K562 (cell line): ENCODE measurements at regions of chr4 and their contacts with region 1.

Region 1: GRCh38 chr4:81471588-81472288 is at the start of gene RASGEF1B:
- DNase-seq: peak; percentile 88 to 98 (median 96)
- ATAC-seq: peak; percentile 99
- H3K4me3 ChIP-seq: peak within 1 kb of the TSS; percentile 64
- H3K27ac ChIP-seq: no peak within 1 kb of the TSS; the same call in 2 of the 3 replicates
- H3K4me1 ChIP-seq: peaks cover 19% of the 10 kb centered on the region in 2 experiments; a peak in 4 of 5 replicates
- H3K27me3 ChIP-seq: peaks cover 17 to 24% of the 10 kb centered on the region in 2 experiments
- CTCF ChIP-seq: no peak
- EP300 ChIP-seq: no peak
- POLR2A ChIP-seq: no peak
- RAD21 ChIP-seq: no peak
- polyA plus RNA-seq, gene RASGEF1B: 0.04 to 0.20 TPM

Region 2: GRCh38 chr4:81272671-81273070 is 199.1 kb before region 1 on chr4:
- CTCF ChIA-PET with region 1: no interaction called
- POLR2A ChIA-PET with region 1: no interaction called
- in situ Hi-C with region 1: no loop called
- intact Hi-C with region 1: no loop called
- DNase-seq: no peak
- ATAC-seq: no peak
- H3K4me3 ChIP-seq: no peak overlapping the region
- H3K27ac ChIP-seq: no peak overlapping the region
- H3K4me1 ChIP-seq: no peaks in the 10 kb centered on the region
- H3K27me3 ChIP-seq: no peaks in the 10 kb centered on the region
- CTCF ChIP-seq: no peak
- EP300 ChIP-seq: no peak
- POLR2A ChIP-seq: no peak
- RAD21 ChIP-seq: no peak

Region 3: DNA sequence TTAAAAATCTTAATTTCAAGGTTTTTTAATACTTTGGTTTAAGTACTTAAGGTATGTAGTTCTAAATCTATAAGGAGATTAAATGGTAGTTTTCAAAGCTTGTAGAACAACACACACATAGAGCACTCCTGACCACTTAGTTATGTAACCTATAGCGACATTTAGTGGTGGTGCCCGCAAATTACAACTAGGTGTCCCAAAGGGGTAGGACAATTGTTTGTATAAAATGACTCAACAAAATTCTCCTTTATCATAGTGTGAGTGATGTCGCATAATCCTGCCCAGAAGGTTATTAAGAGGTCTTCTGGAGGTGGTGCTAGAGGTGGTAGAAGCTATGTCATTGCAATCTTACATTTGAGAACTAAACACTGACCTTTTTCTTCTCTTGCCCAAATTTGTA is 373.0 kb after region 1 on chr4:
- CTCF ChIA-PET with region 1: interaction called, 24 read pairs
- POLR2A ChIA-PET with region 1: no interaction called
- in situ Hi-C with region 1: loop called (anchors 5 kb)
- intact Hi-C with region 1: loop called (anchors 1 kb)
- DNase-seq: peak; percentile 56 to 82 (median 68)
- ATAC-seq: peak; percentile 99
- H3K4me3 ChIP-seq: no peak overlapping the region
- H3K27ac ChIP-seq: no peak overlapping the region
- H3K4me1 ChIP-seq: peaks cover 0 to 11% of the 10 kb centered on the region in 2 experiments; a peak in 2 of 5 replicates
- H3K27me3 ChIP-seq: peaks cover 0 to 8% of the 10 kb centered on the region in 2 experiments; a peak in 2 of 5 replicates
- CTCF ChIP-seq: peak; percentile 63 to 90 (median 84)
- EP300 ChIP-seq: no peak
- POLR2A ChIP-seq: no peak
- RAD21 ChIP-seq: peak; percentile 91 to 92

Region 4: DNA sequence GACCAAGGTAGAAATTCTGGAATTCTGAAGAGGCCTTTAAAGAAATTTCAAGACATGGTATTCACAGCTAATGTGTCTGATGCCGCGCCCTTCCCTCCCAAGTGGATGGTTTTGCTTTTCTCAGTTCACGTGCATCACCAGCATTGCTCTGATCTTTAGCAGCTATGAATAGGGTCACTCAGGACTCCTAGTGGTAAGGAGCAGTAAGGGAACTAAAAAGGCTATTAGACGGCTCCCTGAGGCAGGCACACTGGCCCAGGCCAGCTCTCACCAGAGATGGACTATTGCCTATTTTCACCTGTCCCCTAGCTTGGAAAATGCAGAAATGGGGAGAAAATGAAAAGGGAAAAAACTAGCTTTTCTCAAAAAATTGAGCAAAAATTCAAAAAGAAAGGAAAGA is 447.5 kb after region 1 on chr4:
- CTCF ChIA-PET with region 1: interaction called, 3 read pairs
- POLR2A ChIA-PET with region 1: no interaction called
- in situ Hi-C with region 1: no loop called
- intact Hi-C with region 1: loop called (anchors 5 kb)
- DNase-seq: peak; percentile 25 to 46 (median 32)
- ATAC-seq: peak; percentile 98
- H3K4me3 ChIP-seq: no peak overlapping the region
- H3K27ac ChIP-seq: no peak overlapping the region
- H3K4me1 ChIP-seq: no peaks in the 10 kb centered on the region
- H3K27me3 ChIP-seq: peaks cover 0 to 11% of the 10 kb centered on the region in 2 experiments; a peak in 3 of 5 replicates
- CTCF ChIP-seq: peak; percentile 57 to 61 (median 58)
- EP300 ChIP-seq: no peak
- POLR2A ChIP-seq: no peak
- RAD21 ChIP-seq: peak; percentile 33 to 46

Region 5: GRCh38 chr4:82268050-82268825 is 796.5 kb after region 1 on chr4:
- CTCF ChIA-PET with region 1: no interaction called
- POLR2A ChIA-PET with region 1: no interaction called
- in situ Hi-C with region 1: no loop called
- intact Hi-C with region 1: loop called (anchors 5 kb)
- DNase-seq: peak; percentile 22 to 59 (median 41)
- ATAC-seq: peak; percentile 99
- H3K4me3 ChIP-seq: no peak overlapping the region
- H3K27ac ChIP-seq: no peak overlapping the region
- H3K4me1 ChIP-seq: no peaks in the 10 kb centered on the region
- H3K27me3 ChIP-seq: peaks cover 7 to 20% of the 10 kb centered on the region in 2 experiments; a peak in 4 of 5 replicates
- CTCF ChIP-seq: peak; percentile 74 to 81 (median 76)
- EP300 ChIP-seq: no peak
- POLR2A ChIP-seq: no peak
- RAD21 ChIP-seq: peak; percentile 79 to 83